Activated CD4-positive, alpha-beta T cell treated with anti-CD3 and anti-CD28 coated beads for 36 hours (primary cell): ENCODE measurements at regions of chr6 and their contacts with region 1.

Region 1: GRCh38 chr6:31541658-31542521 is at the start of gene DDX39B:
- DNase-seq: peak; percentile 96
- ATAC-seq: peak; percentile 77
- H3K4me3 Mint-ChIP-seq: peak within 1 kb of the TSS; percentile 79
- H3K27ac Mint-ChIP-seq: peak within 1 kb of the TSS; percentile 92
- H3K4me1 Mint-ChIP-seq: peaks cover 50% of the 10 kb centered on the region
- H3K27me3 Mint-ChIP-seq: no peaks in the 10 kb centered on the region
- total RNA-seq, gene DDX39B: 517 to 569 TPM

Region 2: GRCh38 chr6:30678964-30679726 is 862.7 kb before region 1 on chr6:
- CTCF ChIA-PET with region 1: no interaction called
- POLR2A ChIA-PET with region 1: no interaction called
- intact Hi-C with region 1: loop called in 1 of 2 experiments (anchors 1 kb)
- DNase-seq: peak; percentile 96
- ATAC-seq: peak; percentile 37
- H3K4me3 Mint-ChIP-seq: peak overlapping the region; percentile 100
- H3K27ac Mint-ChIP-seq: peak overlapping the region; percentile 97
- H3K4me1 Mint-ChIP-seq: peaks cover 23% of the 10 kb centered on the region
- H3K27me3 Mint-ChIP-seq: no peaks in the 10 kb centered on the region

Region 3: GRCh38 chr6:30998785-30999184 is 543.1 kb before region 1 on chr6:
- CTCF ChIA-PET with region 1: no interaction called
- POLR2A ChIA-PET with region 1: no interaction called
- intact Hi-C with region 1: no loop called
- DNase-seq: no peak
- ATAC-seq: no peak
- H3K4me3 Mint-ChIP-seq: no peak overlapping the region
- H3K27ac Mint-ChIP-seq: no peak overlapping the region
- H3K4me1 Mint-ChIP-seq: no peaks in the 10 kb centered on the region
- H3K27me3 Mint-ChIP-seq: no peaks in the 10 kb centered on the region

Region 4: DNA sequence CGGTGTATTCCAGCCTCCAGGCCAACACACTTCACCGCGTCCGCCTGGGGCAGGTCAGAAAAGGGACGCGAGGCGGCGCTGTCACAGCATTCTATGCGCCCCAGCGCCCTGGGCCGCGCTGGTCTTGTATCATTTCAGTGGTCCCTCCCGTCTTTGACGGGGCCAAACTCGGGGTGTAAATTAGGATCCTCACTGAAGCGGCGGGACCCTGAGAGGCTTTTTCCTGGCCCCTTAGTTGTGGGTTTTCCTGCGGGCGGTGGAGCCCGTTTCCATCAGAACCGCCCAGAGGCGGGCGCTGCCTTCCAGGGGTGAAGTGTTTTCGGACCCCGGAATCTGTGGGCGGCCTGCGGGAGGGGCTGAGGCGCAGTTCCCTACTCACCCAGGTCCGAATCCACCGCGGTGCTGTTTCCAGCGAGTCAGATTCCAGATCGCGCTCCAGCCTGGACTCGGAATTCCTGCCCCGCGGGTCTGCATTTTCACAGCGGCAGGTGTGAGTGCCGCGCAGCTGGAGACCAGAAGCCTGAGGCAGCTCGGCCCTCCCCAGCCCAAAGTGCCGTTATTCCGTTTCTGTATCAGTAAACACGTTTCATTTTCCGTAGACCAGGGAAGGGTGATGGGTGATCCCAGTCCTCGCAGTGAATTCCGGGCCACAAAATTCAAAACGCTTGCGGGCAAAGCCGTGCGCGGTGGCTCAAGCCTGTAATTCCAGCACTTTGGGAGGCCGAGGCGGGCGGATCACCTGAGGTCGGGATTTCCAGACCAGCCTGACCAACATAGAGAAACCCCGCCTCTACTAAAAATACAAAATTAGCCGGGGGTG is 47.8 kb before region 1 on chr6:
- CTCF ChIA-PET with region 1: interaction called, 41 read pairs
- POLR2A ChIA-PET with region 1: interaction called, 6 read pairs
- intact Hi-C with region 1: loop called (anchors 1 kb)
- DNase-seq: peak; percentile 91
- ATAC-seq: peak; percentile 58
- H3K4me3 Mint-ChIP-seq: peak overlapping the region; percentile 79
- H3K27ac Mint-ChIP-seq: peak overlapping the region; percentile 90
- H3K4me1 Mint-ChIP-seq: peaks cover 43% of the 10 kb centered on the region
- H3K27me3 Mint-ChIP-seq: no peaks in the 10 kb centered on the region

Region 5: DNA sequence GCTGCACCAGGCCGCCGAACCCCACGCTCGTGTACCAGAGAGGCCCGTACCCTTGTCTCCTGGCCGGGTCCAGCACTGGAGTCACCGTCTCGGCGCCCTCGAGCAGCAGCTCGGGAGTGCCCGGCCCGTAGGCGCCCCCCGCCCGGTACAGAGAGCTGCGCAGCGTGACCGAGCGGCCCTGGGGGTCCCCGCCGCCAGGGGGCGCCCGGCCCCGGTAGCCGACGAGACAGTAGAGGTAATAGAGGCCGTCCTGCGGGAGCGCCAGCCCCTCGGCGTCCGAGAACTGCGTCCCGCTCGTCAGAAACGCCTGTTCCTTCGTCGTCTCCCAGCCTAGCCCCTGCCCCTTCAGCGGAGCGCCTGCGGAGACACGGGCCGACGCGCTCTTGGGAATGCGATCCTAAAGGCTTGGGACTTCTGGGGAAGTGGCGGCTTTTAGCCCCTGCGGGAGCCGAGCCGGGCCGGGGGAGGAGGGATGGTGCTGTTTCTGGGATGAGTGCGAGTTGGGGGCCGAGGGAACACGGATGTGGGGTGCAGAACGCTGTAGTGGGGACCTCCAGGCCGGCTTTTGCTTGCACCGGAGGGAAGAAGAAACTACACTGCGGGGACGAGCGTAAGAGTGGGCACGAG is 39.0 kb after region 1 on chr6:
- CTCF ChIA-PET with region 1: interaction called, 278 read pairs
- POLR2A ChIA-PET with region 1: interaction called, 11 read pairs
- intact Hi-C with region 1: loop called (anchors 1 to 2 kb)
- DNase-seq: peak; percentile 94
- ATAC-seq: peak; percentile 67
- H3K4me3 Mint-ChIP-seq: peak overlapping the region; percentile 97
- H3K27ac Mint-ChIP-seq: peak overlapping the region; percentile 97
- H3K4me1 Mint-ChIP-seq: peaks cover 56% of the 10 kb centered on the region
- H3K27me3 Mint-ChIP-seq: no peaks in the 10 kb centered on the region

Region 6: GRCh38 chr6:31652925-31653718 is 111.2 kb after region 1 on chr6:
- CTCF ChIA-PET with region 1: interaction called, 4 read pairs
- POLR2A ChIA-PET with region 1: interaction called, 11 read pairs
- intact Hi-C with region 1: loop called in 1 of 2 experiments (anchors 1 kb)
- DNase-seq: peak; percentile 91
- ATAC-seq: peak; percentile 71
- H3K4me3 Mint-ChIP-seq: peak overlapping the region; percentile 88
- H3K27ac Mint-ChIP-seq: peak overlapping the region; percentile 96
- H3K4me1 Mint-ChIP-seq: peaks cover 38% of the 10 kb centered on the region
- H3K27me3 Mint-ChIP-seq: no peaks in the 10 kb centered on the region

Region 7: DNA sequence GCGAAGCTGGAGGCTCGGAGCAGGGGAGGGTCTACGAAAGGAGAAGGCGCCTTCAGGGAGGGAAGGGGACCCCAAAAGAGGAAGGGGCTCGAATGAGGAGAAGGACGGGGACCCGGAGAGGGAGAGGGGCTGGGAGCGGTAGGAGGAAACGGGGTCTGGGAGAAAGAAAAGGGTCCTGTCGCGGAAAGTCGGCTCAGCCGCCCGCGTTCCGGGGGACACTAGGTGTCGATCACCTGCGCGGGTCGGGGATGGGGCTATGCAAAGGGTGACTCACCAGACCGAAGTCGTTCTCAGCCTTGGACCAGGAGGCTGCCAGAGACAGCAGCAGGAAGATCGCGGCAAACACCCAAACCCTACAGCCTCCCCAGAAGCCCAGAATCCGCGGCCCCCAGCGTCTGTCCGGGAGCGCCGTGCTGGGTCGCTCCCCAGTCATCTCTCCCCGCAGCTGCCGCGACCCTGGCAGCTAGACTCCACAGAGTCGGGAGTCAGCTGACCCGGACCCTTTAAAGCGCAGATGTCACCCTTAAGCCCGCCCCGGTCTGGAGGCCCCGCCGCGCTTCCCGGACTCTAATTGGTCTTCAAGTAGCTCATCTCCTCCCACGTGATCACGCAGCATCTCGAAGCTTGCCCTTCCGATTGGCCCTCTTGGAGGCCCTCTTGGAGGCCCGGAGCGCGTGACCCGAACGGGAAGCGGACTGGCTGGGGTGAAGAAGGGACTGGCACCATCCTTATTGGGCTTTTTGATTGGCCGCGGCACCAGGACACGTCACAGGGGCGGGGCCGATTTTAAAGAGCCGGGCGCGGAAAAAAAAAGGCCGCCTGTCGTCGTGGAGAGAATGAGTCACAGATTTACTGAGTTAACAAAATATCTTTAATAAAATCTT is 320.7 kb after region 1 on chr6 and contains the start of gene NEU1:
- CTCF ChIA-PET with region 1: interaction called, 3 read pairs
- POLR2A ChIA-PET with region 1: interaction called, 4 read pairs
- intact Hi-C with region 1: loop called in 1 of 2 experiments (anchors 1 kb)
- DNase-seq: peak; percentile 100
- ATAC-seq: peak; percentile 98
- H3K4me3 Mint-ChIP-seq: peak within 1 kb of the TSS; percentile 90
- H3K27ac Mint-ChIP-seq: peak within 1 kb of the TSS; percentile 91
- H3K4me1 Mint-ChIP-seq: peaks cover 27% of the 10 kb centered on the region
- H3K27me3 Mint-ChIP-seq: no peaks in the 10 kb centered on the region
- total RNA-seq, gene NEU1: 11.6 to 11.8 TPM

Region 8: GRCh38 chr6:32127717-32128592 is 586.1 kb after region 1 on chr6 and contains the start of gene ATF6B:
- CTCF ChIA-PET with region 1: no interaction called
- POLR2A ChIA-PET with region 1: no interaction called
- intact Hi-C with region 1: loop called in 1 of 2 experiments (anchors 10 kb)
- DNase-seq: peak; percentile 99
- ATAC-seq: peak; percentile 91
- H3K4me3 Mint-ChIP-seq: peak within 1 kb of the TSS; percentile 99
- H3K27ac Mint-ChIP-seq: peak within 1 kb of the TSS; percentile 98
- H3K4me1 Mint-ChIP-seq: peaks cover 39% of the 10 kb centered on the region
- H3K27me3 Mint-ChIP-seq: no peaks in the 10 kb centered on the region
- total RNA-seq, gene ATF6B: 60.2 to 63.4 TPM